ENCODE measurements at regions of chr4 and their contacts with region 1.

Region 1: DNA sequence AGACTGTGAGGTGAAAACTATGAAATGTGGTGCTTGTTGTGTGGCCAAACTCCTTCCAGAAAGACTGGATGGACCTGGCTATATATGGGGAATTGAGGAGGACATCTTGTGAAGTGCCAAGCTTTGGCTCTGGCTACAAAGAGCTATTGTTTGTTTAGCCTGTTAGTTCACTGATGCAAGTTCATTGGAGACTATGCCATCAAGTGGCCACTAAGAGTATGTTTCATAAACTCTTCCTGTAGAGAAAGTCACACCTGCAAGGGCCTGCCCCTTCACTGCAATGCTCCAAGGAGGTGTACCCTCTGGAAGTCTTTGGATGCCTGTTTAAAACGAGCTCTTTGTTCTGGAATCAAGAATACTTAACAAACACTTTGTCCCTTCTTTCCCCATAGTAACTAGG is 382.0 kb downstream of the GABRG1 start:
- DNase-seq: no peak
- ATAC-seq: no peak

Region 2: DNA sequence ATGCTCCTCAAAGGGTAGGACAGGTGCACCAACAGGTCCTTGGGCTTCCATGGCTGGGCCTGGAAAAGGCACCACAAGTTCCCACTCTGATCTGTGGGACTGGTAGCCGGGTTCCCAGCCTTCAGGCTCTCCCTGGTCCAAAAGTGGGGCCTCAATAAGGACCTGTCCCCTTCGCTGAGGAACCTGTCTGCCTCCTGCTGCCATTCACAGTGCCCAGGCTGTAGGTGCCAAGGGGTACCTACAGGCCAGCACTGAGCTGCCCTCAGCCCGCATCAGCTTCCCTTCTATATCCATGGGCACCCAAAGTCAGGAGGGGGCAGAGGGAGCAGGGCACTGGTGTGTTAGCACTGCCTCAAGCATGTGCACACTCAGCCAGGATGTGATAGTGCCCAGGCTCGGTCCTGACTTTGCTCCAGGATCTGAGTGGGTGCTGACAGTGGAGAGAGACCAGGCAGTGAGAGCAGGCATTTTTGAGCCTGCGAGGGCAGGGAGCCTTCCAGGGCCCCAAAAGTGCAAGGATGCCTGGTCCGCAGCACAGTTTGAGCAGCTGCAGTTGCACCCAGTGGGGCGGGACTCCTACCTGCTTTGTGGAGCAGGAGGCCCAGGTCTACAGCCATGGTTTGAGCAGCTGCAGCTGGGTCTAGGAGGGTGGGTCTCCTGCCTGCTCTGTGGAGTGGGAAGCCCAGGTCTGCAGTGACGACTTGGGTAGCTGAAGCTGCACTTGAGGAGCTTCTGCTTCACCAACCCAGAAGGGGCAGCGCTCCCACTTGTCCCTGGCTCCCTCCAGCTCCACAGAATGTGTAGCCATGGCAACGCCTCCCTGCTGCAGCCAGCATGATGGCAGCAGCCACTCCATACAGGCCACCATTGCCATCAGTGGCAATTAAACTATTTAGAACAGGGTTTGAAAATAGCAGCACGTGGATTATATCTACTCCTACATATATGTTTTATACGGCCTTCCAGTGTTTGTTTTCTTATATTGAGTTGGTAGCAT is 1669.6 kb before region 1 on chr4:
- intact Hi-C with region 1: no loop called
- DNase-seq: no peak
- ATAC-seq: no peak

Region 3: GRCh38 chr4:45410701-45411210 is 331.1 kb before region 1 on chr4:
- intact Hi-C with region 1: no loop called
- DNase-seq: no peak
- ATAC-seq: no peak

Region 4: GRCh38 chr4:45550766-45551366 is 191.0 kb before region 1 on chr4:
- intact Hi-C with region 1: loop called (anchors 10 kb)
- DNase-seq: no peak
- ATAC-seq: peak; percentile 53

Measured in Right ventricle myocardium superior (tissue), 1 donor.